Natural killer cell (primary cell): ENCODE measurements at regions of chr2 and their contacts with region 1.

Region 1: GRCh38 chr2:134717286-134718022 is 1.3 kb downstream of the TMEM163 start:
- DNase-seq: no peak
- ATAC-seq: no peak
- H3K4me3 ChIP-seq: no peak overlapping the region
- H3K4me3 Mint-ChIP-seq: peak overlapping the region; percentile 89
- H3K27ac ChIP-seq: no peak overlapping the region
- H3K27ac Mint-ChIP-seq: peak overlapping the region; percentile 35 to 82
- H3K4me1 ChIP-seq: peaks cover 37% of the 10 kb centered on the region
- H3K4me1 Mint-ChIP-seq: peaks cover 44 to 55% of the 10 kb centered on the region in 2 donors
- H3K27me3 ChIP-seq: peaks cover 16% of the 10 kb centered on the region
- H3K27me3 Mint-ChIP-seq: peaks cover 29 to 43% of the 10 kb centered on the region in 2 donors
- CTCF ChIP-seq: no peak

Region 2: GRCh38 chr2:134581877-134582546 is 135.4 kb before region 1 on chr2:
- intact Hi-C with region 1: loop called (anchors 2 kb)
- DNase-seq: no peak
- ATAC-seq: no peak
- H3K4me3 ChIP-seq: no peak overlapping the region
- H3K4me3 Mint-ChIP-seq: peak overlapping the region; percentile 5
- H3K27ac ChIP-seq: no peak overlapping the region
- H3K27ac Mint-ChIP-seq: peak overlapping the region; percentile 77 to 79
- H3K4me1 ChIP-seq: peaks cover 46% of the 10 kb centered on the region
- H3K4me1 Mint-ChIP-seq: peaks cover 39 to 58% of the 10 kb centered on the region in 2 donors
- H3K27me3 ChIP-seq: no peaks in the 10 kb centered on the region
- H3K27me3 Mint-ChIP-seq: no peaks in the 10 kb centered on the region
- CTCF ChIP-seq: no peak